ENCODE measurements at regions of chr2 and their contacts with region 1.

Region 1: DNA sequence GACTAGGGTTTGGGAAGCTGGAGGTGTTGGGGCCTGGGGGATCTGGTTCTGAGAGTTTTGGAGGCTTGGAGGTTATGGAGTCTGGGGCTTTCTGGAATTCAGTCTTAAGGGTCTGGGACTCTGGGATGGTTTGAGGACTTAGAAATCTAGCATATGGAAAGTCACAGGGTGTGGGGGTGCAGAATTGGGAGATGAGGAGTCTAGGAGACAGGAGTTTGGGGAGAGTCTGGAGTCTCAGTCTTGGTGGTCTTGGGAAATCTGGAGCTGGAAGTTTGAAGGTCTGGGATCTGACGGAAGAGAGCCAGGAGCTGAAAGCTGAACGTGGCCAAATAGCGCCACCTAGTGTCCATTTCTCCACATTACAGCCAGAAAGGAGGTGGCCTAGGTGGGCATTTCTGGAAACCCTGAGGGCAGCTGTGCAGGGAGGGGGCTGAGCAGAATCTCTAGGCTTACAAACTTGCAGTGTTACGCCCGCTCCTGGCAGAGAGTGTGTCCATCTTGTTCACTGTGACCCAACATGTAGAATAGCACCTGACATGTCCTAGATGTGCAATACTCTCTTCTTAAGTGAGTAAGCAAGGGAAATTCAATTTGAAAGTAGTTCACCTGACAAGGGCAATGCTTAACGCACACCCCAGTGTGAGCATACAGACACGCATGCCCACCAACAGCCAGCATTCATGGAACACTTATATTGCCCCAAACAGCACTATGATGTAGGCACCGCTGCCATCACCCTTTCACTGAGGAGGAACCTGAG is 204.8 kb downstream of the TFCP2L1 start:
- DNase-seq: peak in 2 of 3 donors; percentile 38 to 71
- ATAC-seq: peak; percentile 38 to 43
- H3K4me3 ChIP-seq: no peak overlapping the region
- H3K27ac ChIP-seq: no peak overlapping the region
- H3K4me1 ChIP-seq: no peaks in the 10 kb centered on the region
- H3K27me3 ChIP-seq: no peaks in the 10 kb centered on the region

Region 2: GRCh38 chr2:120330946-120331822 is 749.0 kb before region 1 on chr2:
- intact Hi-C with region 1: loop called in 1 of 4 experiments (anchors 10 kb)
- DNase-seq: no peak
- ATAC-seq: peak in 1 of 2 donors; percentile 19
- H3K4me3 ChIP-seq: no peak overlapping the region
- H3K27ac ChIP-seq: no peak overlapping the region
- H3K4me1 ChIP-seq: no peaks in the 10 kb centered on the region
- H3K27me3 ChIP-seq: no peaks in the 10 kb centered on the region

Region 3: GRCh38 chr2:121155502-121156056 is 75.4 kb after region 1 on chr2:
- intact Hi-C with region 1: no loop called
- DNase-seq: no peak
- ATAC-seq: peak in 1 of 2 donors; percentile 24
- H3K4me3 ChIP-seq: no peak overlapping the region
- H3K27ac ChIP-seq: no peak overlapping the region
- H3K4me1 ChIP-seq: no peaks in the 10 kb centered on the region
- H3K27me3 ChIP-seq: no peaks in the 10 kb centered on the region